ENCODE measurements at regions of chr3 and their contacts with region 1.

Region 1: DNA sequence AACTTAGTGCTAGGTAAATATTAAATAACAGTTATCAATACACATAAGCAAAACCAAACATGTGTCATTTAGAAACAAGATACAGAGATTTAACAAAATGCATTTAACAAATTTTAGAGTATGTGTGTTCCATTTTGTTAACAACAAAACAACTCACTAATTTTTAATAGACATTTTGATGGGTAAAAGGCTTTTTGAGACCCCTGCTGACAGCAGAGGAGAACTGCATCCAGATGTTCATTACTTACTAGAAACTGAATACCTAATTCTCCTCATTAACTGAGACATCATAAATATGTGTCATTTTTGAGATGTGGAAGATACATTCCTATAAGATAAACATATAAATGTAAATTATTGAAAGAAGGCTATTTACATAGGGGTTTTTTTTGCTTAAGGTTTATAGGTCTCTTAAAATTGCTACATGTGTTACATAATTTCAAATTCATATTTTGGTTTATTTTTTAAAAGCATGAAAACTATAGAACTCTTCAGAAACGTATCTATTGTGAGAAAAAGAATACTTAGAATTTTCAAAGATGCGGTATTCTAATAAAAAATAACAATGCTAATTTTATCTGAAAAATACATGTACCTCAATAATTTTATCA is 1009.8 kb downstream of the TUSC7 start:
- DNase-seq: peak; percentile 4
- ATAC-seq: no peak
- H3K4me3 Mint-ChIP-seq: no peak overlapping the region
- H3K27ac Mint-ChIP-seq: no peak overlapping the region
- H3K4me1 Mint-ChIP-seq: no peaks in the 10 kb centered on the region
- H3K27me3 Mint-ChIP-seq: no peaks in the 10 kb centered on the region

Region 2: DNA sequence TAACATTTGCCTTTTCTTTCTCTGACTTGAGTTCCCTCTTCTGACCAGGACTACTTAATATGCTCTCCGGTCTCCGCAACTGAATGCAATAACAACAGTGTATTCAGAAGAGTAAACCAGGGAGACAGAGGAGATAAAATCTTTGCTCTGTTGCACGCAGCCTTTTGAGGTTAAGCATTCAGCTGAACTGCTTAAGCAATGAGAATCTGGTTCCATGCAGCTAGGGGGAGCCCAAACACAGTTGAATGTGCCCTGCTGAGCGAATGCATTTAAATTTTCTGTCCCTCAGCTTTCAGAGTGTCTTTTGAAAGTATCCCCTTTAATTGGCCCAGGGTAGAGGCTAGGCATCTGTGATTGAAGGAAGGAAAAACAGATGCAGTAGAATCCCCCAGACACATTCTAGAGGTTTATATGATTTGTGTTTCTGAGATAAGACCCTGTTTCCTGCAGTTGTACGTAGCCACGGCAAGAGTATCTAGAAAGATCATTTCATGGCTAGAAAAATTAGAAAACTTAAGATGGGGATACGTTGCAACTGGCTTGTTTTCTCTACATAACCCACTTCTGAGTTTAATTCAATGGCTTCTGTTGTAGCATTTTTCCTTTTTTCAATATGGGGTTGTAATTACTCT is 700.2 kb before region 1 on chr3:
- CTCF ChIA-PET with region 1: no interaction called
- POLR2A ChIA-PET with region 1: no interaction called
- intact Hi-C with region 1: loop called in 1 of 2 experiments (anchors 2 kb)
- DNase-seq: peak; percentile 54
- ATAC-seq: no peak
- H3K4me3 Mint-ChIP-seq: no peak overlapping the region
- H3K27ac Mint-ChIP-seq: no peak overlapping the region
- H3K4me1 Mint-ChIP-seq: no peaks in the 10 kb centered on the region
- H3K27me3 Mint-ChIP-seq: no peaks in the 10 kb centered on the region

Region 3: DNA sequence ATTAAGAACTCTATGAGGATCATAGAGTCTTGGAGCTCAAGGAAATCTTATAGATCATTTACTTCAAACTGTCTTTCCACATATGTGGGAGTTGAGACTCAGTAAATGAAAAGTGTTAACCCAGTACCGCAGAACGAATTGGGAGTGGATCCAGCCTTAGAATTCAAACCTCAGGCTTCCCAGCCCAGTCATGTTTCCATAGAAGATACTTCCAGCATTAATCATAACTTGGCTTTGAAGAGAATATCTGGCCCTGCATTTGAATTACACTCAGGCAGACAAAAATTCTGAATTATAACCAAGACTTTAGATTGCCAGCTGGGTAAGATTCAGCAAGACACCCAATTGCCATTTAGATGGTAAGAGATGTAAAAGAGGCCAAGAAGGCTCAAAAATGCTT is 37.8 kb before region 1 on chr3:
- CTCF ChIA-PET with region 1: no interaction called
- POLR2A ChIA-PET with region 1: no interaction called
- intact Hi-C with region 1: no loop called
- DNase-seq: no peak
- ATAC-seq: no peak
- H3K4me3 Mint-ChIP-seq: no peak overlapping the region
- H3K27ac Mint-ChIP-seq: no peak overlapping the region
- H3K4me1 Mint-ChIP-seq: no peaks in the 10 kb centered on the region
- H3K27me3 Mint-ChIP-seq: no peaks in the 10 kb centered on the region